ENCODE measurements at regions of chr1 and their contacts with region 1.

Region 1: DNA sequence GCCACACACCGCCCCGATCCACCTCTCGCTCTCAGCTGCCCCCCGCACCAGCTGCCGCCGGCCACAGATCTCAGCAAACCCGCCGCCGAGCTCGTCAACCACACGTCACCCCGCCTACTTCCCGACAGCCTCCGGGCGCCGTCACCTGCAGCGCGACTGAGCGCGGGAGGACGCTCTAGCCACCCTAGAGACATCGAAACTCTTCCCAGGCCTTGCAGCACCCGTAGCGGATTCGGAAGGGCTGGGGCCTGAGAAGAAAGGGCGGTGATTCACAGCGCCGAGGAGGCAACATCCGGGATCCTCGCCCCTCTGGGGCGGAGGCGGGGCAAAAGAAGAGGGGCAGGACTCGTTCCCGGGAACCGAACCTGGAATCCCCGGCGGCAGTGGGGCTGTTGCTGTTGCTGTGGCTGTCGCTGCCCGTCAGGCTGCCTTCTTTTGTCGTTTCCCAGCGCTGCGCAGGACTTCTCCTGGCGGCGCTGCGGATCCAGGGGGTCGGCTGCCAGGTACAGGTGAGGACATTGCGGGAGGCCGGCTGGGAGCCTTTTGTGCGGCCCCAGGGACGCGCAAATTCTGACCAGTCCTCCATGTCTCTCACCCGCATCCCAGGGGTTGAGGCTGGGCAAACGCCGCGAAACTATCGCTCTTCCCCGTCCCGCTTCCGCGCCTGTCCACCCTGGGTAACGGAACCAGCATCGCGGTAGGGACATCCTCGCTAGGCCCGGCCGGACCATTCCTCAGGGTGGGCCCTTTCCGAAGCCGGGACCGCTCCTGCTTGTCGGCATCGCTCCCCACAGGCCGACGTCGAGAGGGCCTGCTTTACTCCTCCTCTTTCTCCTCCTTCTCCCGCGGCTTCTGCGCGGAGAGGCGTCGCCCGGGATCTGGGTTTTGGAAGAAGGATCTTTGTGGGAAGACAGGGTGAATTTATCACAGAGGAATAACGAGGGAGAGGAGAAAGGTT is at the starts of genes RO60 and UCHL5:
- DNase-seq: peak; percentile 97 to 98
- H3K4me3 ChIP-seq: peak within 1 kb of the TSS; percentile 73 to 90
- H3K27ac ChIP-seq: peak within 1 kb of the TSS; percentile 94
- H3K4me1 ChIP-seq: peaks cover 53% of the 10 kb centered on the region
- H3K27me3 ChIP-seq: no peaks in the 10 kb centered on the region
- CTCF ChIP-seq: peak in 1 of 3 experiments; percentile 5
- POLR2A ChIP-seq: peak in 1 of 2 donors; percentile 83
- total RNA-seq, gene RO60: 79.8 TPM
- total RNA-seq, gene UCHL5: 17.4 TPM

Region 2: DNA sequence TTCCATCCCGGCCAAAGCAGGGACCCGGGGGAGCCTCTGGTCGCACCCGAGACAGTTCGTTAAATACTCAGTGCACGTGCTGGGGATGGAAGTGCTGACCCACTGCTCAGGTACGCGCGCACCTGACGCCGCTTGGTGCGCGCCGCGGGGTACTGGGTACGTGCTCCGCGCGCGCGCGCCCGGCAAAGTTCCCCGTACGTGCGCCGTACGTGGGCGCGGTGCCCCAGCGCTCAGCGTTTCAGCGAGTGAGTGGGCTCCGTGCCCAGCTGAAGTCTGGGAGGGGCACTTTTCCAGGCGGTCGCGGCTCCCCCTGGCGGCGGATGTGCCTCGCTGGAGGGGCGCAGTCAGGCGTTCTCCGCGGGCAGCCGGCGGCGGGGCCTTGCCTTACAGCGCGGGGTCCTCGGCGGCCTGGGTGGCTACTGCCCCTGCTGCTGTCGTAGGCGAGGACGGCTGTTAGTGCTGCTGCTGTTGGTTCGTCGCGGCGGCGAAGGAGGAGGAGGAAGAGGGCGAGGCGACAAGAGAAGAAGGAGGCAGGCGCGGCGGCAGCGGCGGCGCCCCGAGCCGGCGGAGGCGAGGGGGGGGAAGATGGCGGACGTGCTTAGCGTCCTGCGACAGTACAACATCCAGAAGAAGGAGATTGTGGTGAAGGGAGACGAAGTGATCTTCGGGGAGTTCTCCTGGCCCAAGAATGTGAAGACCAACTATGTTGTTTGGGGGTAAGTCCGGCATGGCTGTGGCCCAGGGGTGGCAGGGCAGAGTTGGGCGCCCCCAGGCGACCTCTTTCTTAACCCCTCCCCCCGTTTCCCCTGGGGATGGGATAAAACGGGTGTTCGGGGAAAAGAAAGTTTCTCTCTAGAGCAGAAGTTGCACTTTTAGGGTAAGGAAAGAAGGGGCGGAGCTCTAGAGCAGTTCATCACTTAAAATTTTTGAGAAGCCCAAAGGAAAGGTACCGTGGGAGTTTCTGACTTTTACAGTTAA is 62.4 kb after region 1 on chr1 and contains the start of gene CDC73:
- intact Hi-C with region 1: loop called (anchors 2 kb)
- DNase-seq: peak; percentile 96 to 97
- H3K4me3 ChIP-seq: peak within 1 kb of the TSS; percentile 67 to 82
- H3K27ac ChIP-seq: peak within 1 kb of the TSS; percentile 89
- H3K4me1 ChIP-seq: peaks cover 31% of the 10 kb centered on the region
- H3K27me3 ChIP-seq: no peaks in the 10 kb centered on the region
- CTCF ChIP-seq: peak; percentile 86 to 98 (median 86)
- POLR2A ChIP-seq: peak in 1 of 2 donors; percentile 82
- total RNA-seq, gene CDC73: 28.5 TPM

Region 3: DNA sequence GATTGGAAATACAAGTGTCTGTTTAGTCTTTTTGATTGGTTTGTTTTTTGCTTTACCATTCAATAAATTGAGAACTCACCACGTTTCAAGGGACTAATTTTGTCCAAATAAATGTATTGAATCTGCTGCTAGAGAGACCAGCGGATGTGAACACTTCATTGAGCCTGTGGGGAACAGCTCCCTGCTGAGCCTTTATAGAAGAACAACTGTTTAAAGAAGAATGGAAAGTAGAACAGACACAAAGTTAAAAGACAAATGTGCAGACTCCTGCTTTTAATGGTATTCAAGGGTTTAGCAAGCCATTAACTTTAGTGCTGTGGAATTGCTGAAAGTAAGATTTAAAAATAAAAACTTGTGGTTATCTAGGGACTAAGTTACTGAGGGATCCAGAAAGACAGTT is 944.6 kb after region 1 on chr1:
- intact Hi-C with region 1: no loop called
- DNase-seq: no peak
- H3K4me3 ChIP-seq: no peak overlapping the region
- H3K27ac ChIP-seq: no peak overlapping the region
- H3K4me1 ChIP-seq: no peaks in the 10 kb centered on the region
- H3K27me3 ChIP-seq: no peaks in the 10 kb centered on the region
- CTCF ChIP-seq: no peak
- POLR2A ChIP-seq: no peak

Measured in vagina (tissue), 2 donors.